ENCODE measurements at regions of chr17 and their contacts with region 1.

Region 1: GRCh38 chr17:49567871-49568694 is 7.6 kb upstream of the NXPH3 start:
- DNase-seq: peak; percentile 71
- H3K27ac ChIP-seq: no peak overlapping the region
- CTCF ChIP-seq: peak; percentile 96

Region 2: DNA sequence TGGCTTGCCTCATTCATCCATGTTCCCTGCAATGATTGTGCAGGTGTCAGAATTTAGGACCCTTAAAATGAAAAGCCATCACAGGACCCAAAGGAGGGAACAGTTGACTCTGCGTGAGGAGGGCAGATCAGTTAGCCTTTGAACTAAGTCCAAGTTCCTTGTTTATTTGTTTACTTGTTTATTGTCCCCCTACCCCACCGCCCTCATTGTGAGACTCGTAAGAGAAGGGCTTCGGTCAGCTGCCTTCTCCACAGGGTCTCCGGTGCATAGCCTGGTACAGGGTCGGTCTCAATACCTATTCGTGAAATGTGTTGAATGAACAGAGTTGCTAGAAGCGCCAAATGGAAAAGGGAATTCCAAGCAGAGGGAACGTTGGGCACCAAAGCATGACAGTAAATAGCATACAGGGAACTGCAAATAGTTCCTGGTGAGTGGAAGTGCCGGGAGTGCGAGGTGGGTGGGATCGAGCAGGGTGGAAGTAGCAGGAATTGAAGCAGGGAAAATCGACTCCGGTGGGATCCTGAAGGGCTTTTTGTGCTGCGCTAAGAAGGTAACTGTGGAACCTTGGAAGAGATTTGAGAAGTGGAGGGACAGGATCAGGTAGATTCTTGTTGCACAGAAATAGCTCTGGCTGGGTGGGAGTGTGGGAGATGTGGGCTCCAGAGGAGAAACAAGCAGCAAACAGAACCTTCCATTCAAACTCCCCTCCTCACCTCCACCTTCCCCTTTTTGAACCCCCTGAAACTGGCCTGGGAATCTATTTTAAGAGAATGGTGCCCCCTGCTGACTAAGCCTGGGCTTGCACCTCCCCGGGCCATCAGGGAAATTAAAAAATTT is 127.0 kb after region 1 on chr17:
- CTCF ChIA-PET with region 1: interaction called, 31 read pairs
- POLR2A ChIA-PET with region 1: no interaction called
- DNase-seq: peak; percentile 56
- H3K27ac ChIP-seq: no peak overlapping the region
- CTCF ChIP-seq: peak; percentile 94

Region 3: GRCh38 chr17:49699966-49700575 is 132.0 kb after region 1 on chr17:
- CTCF ChIA-PET with region 1: interaction called, 31 read pairs
- POLR2A ChIA-PET with region 1: interaction called, 6 read pairs
- DNase-seq: no peak
- H3K27ac ChIP-seq: peak overlapping the region; percentile 8
- CTCF ChIP-seq: no peak

Measured in RWPE1 (cell line).